Right ventricle myocardium inferior (tissue), 1 donor: ENCODE measurements at regions of chr1 and their contacts with region 1.

Region 1: GRCh38 chr1:74197657-74198552 is at the starts of genes FPGT and LRRIQ3:
- DNase-seq: peak; percentile 97
- ATAC-seq: peak; percentile 100
- total RNA-seq, gene FPGT: 11.6 TPM
- total RNA-seq, gene LRRIQ3: 0.49 TPM

Region 2: DNA sequence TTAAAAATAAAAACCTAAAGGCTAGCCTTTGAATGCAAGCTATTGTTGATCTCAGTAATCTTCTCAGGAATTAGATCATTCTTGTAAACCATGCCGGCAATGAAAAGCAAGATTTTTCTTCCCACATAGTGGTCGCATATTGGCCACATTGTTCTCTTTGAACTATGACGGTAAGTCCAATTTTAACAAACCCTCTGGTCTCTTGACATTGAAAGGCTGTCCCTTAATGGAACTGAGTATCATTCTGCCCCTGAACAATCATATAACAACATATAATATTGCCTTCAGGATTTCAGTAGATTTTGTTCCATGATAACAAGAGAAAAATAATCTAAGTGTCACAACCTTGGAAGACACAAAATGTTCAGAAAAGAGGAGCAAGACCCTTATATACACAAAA is 38.5 kb after region 1 on chr1:
- intact Hi-C with region 1: loop called (anchors 5 kb)
- DNase-seq: no peak
- ATAC-seq: no peak